ENCODE measurements at regions of chr14 and their contacts with region 1.

Region 1: GRCh38 chr14:36553656-36554260 is 28.7 kb downstream of the NKX2-8 start:
- DNase-seq: peak; percentile 72
- ATAC-seq: peak; percentile 75
- H3K4me3 ChIP-seq: no peak overlapping the region
- H3K27ac ChIP-seq: no peak overlapping the region
- H3K4me1 ChIP-seq: no peaks in the 10 kb centered on the region
- H3K27me3 ChIP-seq: peaks cover 13% of the 10 kb centered on the region
- CTCF ChIP-seq: peak; percentile 79

Region 2: GRCh38 chr14:35883677-35884293 is 670.0 kb before region 1 on chr14:
- CTCF ChIA-PET with region 1: no interaction called
- POLR2A ChIA-PET with region 1: no interaction called
- intact Hi-C with region 1: loop called (anchors 2 kb)
- DNase-seq: peak; percentile 60
- ATAC-seq: peak; percentile 75
- H3K4me3 ChIP-seq: peak overlapping the region; percentile 41; the same call in 1 of the 2 replicates
- H3K27ac ChIP-seq: no peak overlapping the region
- H3K4me1 ChIP-seq: peaks cover 12% of the 10 kb centered on the region
- H3K27me3 ChIP-seq: no peaks in the 10 kb centered on the region
- CTCF ChIP-seq: peak; percentile 92

Region 3: GRCh38 chr14:36424478-36425102 is 129.2 kb before region 1 on chr14:
- CTCF ChIA-PET with region 1: no interaction called
- POLR2A ChIA-PET with region 1: no interaction called
- intact Hi-C with region 1: no loop called
- DNase-seq: no peak
- ATAC-seq: no peak
- H3K4me3 ChIP-seq: no peak overlapping the region
- H3K27ac ChIP-seq: no peak overlapping the region
- H3K4me1 ChIP-seq: no peaks in the 10 kb centered on the region
- H3K27me3 ChIP-seq: peaks cover 63% of the 10 kb centered on the region
- CTCF ChIP-seq: no peak

Region 4: DNA sequence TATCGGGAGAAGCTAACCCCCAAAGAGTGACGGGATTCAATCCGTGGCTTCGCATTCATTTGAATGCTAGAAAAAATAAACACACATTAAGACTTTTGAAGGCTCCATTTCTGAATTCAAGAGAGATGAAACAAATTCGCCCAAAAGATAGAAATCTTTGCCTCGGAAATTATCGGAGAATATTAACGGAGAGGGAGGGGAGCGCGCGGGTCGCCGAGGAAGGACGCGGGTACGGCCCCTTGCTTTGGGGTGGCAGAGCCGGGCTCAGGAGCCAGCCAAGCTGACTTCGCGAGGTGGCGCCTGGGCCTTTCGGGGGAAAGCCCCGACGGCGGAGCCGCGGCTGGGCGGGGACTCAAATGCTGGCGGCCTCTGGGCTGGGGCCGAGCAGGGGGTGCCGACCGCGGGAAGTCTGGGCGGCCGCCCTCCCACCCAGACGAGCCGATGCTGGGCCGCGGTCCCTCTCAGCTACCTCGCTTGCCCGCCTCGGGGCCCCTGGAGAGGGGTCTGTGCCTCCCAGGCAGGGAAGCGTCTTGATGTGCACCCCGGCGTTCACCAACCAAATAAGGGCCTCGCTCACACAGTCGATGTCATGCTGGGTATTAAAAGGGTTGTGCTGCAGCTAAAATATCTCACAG is 48.5 kb before region 1 on chr14:
- CTCF ChIA-PET with region 1: no interaction called
- POLR2A ChIA-PET with region 1: no interaction called
- intact Hi-C with region 1: no loop called
- DNase-seq: no peak
- ATAC-seq: no peak
- H3K4me3 ChIP-seq: no peak overlapping the region
- H3K27ac ChIP-seq: no peak overlapping the region
- H3K4me1 ChIP-seq: no peaks in the 10 kb centered on the region
- H3K27me3 ChIP-seq: peaks cover 90% of the 10 kb centered on the region
- CTCF ChIP-seq: no peak

Region 5: DNA sequence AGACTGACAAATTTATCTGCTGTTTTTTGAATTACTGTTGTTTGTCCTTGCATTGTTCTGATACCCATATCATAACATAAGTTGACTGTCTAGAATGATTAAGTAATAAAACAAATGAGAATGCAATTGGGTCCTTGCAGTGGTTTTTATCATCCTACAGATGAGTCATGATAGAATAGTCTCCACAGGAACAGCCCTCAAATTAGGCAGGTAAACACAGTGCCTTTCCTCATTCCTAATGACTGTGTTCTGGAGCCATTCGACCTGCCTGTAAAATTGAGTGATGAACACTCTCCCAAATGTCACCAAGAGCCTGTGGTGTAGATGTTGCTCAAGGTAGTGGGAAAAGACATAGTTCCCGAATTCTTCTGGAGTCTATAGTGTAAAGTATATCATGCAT is 16.3 kb after region 1 on chr14:
- CTCF ChIA-PET with region 1: interaction called, 39 read pairs
- POLR2A ChIA-PET with region 1: no interaction called
- intact Hi-C with region 1: no loop called
- DNase-seq: peak; percentile 79
- ATAC-seq: peak; percentile 93
- H3K4me3 ChIP-seq: no peak overlapping the region
- H3K27ac ChIP-seq: no peak overlapping the region
- H3K4me1 ChIP-seq: 0 out of 2 replicates have a peak, but pooled peaks cover 7% of the 10 kb centered on the region
- H3K27me3 ChIP-seq: peaks cover 19% of the 10 kb centered on the region
- CTCF ChIP-seq: no peak

Region 6: GRCh38 chr14:37131205-37131604 is 577.4 kb after region 1 on chr14:
- CTCF ChIA-PET with region 1: interaction called, 10 read pairs
- POLR2A ChIA-PET with region 1: no interaction called
- intact Hi-C with region 1: no loop called
- DNase-seq: no peak
- ATAC-seq: no peak
- H3K4me3 ChIP-seq: no peak overlapping the region
- H3K27ac ChIP-seq: no peak overlapping the region
- H3K4me1 ChIP-seq: peaks cover 9% of the 10 kb centered on the region
- H3K27me3 ChIP-seq: no peaks in the 10 kb centered on the region
- CTCF ChIP-seq: no peak

Region 7: GRCh38 chr14:38158468-38158867 is 1604.7 kb after region 1 on chr14:
- CTCF ChIA-PET with region 1: interaction called, 11 read pairs
- POLR2A ChIA-PET with region 1: no interaction called
- intact Hi-C with region 1: no loop called
- DNase-seq: no peak
- ATAC-seq: no peak
- H3K4me3 ChIP-seq: no peak overlapping the region
- H3K27ac ChIP-seq: no peak overlapping the region
- H3K4me1 ChIP-seq: no peaks in the 10 kb centered on the region
- H3K27me3 ChIP-seq: no peaks in the 10 kb centered on the region; the same call in 1 of the 2 replicates
- CTCF ChIP-seq: no peak

Measured in PC-3 (cell line).